ENCODE measurements at regions of chr10 and their contacts with region 1.

Region 1: DNA sequence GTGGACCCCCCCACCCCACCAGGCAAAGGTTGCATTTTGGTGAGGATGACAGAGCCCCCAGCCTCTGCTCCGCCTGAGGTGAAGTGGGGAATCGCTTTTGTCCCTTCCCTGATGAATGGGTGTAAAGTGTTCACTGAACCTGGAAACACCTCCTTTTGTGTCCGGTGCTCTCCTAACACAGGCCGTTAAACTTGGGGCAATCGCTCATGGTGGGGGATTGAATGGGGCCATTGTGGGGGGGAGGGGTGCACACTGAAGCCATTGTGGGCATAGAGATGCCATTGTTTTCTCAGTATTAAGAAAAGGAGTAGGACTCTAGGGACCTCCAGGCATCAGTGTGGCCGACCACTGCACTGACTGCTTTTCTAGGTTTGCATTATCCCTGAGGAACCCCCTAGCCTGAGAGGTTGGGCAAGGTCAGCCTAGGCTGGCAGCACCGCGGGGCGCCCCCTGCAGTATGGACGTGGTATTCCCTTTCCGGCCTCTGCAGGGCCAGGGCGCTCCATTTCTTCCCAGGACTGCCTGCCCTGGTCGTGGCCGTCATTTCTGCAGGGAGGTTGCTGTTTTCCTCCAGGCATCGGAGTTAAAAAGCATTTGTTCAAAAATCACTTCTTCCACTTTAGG is 158.3 kb downstream of the TCF7L2 start:
- DNase-seq: peak in 3 of 9 donors; percentile 7 to 35 (median 10)
- ATAC-seq: peak; percentile 53
- H3K4me3 ChIP-seq: no peak overlapping the region
- H3K4me3 Mint-ChIP-seq: no peak overlapping the region
- H3K27ac ChIP-seq: no peak overlapping the region
- H3K27ac Mint-ChIP-seq: no peak overlapping the region
- H3K4me1 ChIP-seq: no peaks in the 10 kb centered on the region
- H3K4me1 Mint-ChIP-seq: no peaks in the 10 kb centered on the region
- H3K27me3 ChIP-seq: no peaks in the 10 kb centered on the region
- H3K27me3 Mint-ChIP-seq: peaks cover 0 to 17% (median 6%) of the 10 kb centered on the region in 5 donors

Region 2: GRCh38 chr10:112565434-112566053 is 542.8 kb before region 1 on chr10:
- CTCF ChIA-PET with region 1: no interaction called
- POLR2A ChIA-PET with region 1: no interaction called
- intact Hi-C with region 1: loop called in 1 of 2 experiments (anchors 10 kb)
- DNase-seq: peak in 1 of 9 donors; percentile 2
- ATAC-seq: no peak
- H3K4me3 ChIP-seq: no peak overlapping the region
- H3K4me3 Mint-ChIP-seq: no peak overlapping the region
- H3K27ac ChIP-seq: no peak overlapping the region
- H3K27ac Mint-ChIP-seq: no peak overlapping the region
- H3K4me1 ChIP-seq: no peaks in the 10 kb centered on the region
- H3K4me1 Mint-ChIP-seq: no peaks in the 10 kb centered on the region
- H3K27me3 ChIP-seq: no peaks in the 10 kb centered on the region
- H3K27me3 Mint-ChIP-seq: no peaks in the 10 kb centered on the region

Region 3: GRCh38 chr10:113139699-113140098 is 31.4 kb after region 1 on chr10:
- CTCF ChIA-PET with region 1: no interaction called
- POLR2A ChIA-PET with region 1: no interaction called
- intact Hi-C with region 1: no loop called
- DNase-seq: no peak
- ATAC-seq: no peak
- H3K4me3 ChIP-seq: no peak overlapping the region
- H3K4me3 Mint-ChIP-seq: no peak overlapping the region
- H3K27ac ChIP-seq: no peak overlapping the region
- H3K27ac Mint-ChIP-seq: no peak overlapping the region
- H3K4me1 ChIP-seq: no peaks in the 10 kb centered on the region
- H3K4me1 Mint-ChIP-seq: peaks cover 0 to 2% (median 0%) of the 10 kb centered on the region in 7 donors
- H3K27me3 ChIP-seq: no peaks in the 10 kb centered on the region
- H3K27me3 Mint-ChIP-seq: peaks cover 0 to 3% (median 0%) of the 10 kb centered on the region in 5 donors

Region 4: GRCh38 chr10:114442136-114442535 is 1333.8 kb after region 1 on chr10:
- CTCF ChIA-PET with region 1: no interaction called
- POLR2A ChIA-PET with region 1: no interaction called
- intact Hi-C with region 1: no loop called
- DNase-seq: no peak
- ATAC-seq: no peak
- H3K4me3 ChIP-seq: no peak overlapping the region
- H3K4me3 Mint-ChIP-seq: no peak overlapping the region
- H3K27ac ChIP-seq: no peak overlapping the region
- H3K27ac Mint-ChIP-seq: peak overlapping the region in 3 of 9 donors; percentile 28 to 48 (median 41)
- H3K4me1 ChIP-seq: no peaks in the 10 kb centered on the region
- H3K4me1 Mint-ChIP-seq: peaks cover 0 to 13% (median 5%) of the 10 kb centered on the region in 7 donors
- H3K27me3 ChIP-seq: no peaks in the 10 kb centered on the region
- H3K27me3 Mint-ChIP-seq: no peaks in the 10 kb centered on the region

Measured in naive thymus-derived CD4-positive, alpha-beta T cell (primary cell).